ENCODE measurements at regions of chr11 and their contacts with region 1.

Region 1: DNA sequence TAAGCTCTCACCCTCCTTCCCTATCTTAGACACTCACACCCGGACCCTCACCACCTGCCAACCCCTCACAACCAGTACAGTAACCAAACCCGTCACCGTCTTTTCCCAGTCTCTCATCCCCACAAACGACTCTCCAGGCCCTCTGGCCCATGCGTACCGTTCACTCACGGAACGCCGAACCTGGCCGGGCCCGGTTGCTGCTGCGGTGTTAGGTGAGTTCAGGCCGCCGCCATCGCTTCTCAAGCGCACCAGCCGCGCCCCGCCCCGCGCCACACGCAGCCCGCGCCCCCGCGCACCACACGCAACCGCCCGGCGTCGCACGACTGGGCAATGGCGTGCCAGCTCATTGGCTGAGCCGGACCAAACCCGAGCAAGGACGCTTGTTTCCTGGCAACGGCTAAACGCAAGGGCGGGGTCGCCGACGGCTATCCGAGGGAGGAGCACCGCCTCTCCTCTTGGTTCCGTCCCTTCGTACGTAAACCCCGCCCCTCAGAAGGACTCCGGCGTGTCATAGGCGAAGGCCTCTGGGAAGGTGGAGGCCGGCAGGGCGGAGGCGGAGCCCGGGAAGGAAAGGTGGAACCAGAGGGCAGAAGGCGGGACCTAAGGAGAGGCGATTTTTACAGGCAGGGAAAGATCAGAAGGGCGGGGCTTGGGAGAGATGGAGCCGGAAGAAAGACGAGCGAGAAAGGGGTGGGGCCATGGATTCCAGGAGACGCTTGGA is at the start of gene FHIP1B:
- DNase-seq: peak; percentile 99 to 100 (median 100)
- H3K4me3 ChIP-seq: peak within 1 kb of the TSS; percentile 80 to 86
- H3K4me3 Mint-ChIP-seq: peak within 1 kb of the TSS; percentile 96 to 100 (median 98)
- H3K27ac ChIP-seq: peak within 1 kb of the TSS; percentile 75
- H3K27ac Mint-ChIP-seq: peak within 1 kb of the TSS; percentile 87 to 100 (median 99)
- H3K4me1 ChIP-seq: peaks cover 32% of the 10 kb centered on the region
- H3K4me1 Mint-ChIP-seq: peaks cover 27 to 51% (median 42%) of the 10 kb centered on the region in 4 donors
- H3K27me3 ChIP-seq: no peaks in the 10 kb centered on the region
- H3K27me3 Mint-ChIP-seq: peaks cover 0 to 2% of the 10 kb centered on the region in 2 donors
- total RNA-seq, gene FHIP1B: 48.7 to 50.8 TPM

Region 2: DNA sequence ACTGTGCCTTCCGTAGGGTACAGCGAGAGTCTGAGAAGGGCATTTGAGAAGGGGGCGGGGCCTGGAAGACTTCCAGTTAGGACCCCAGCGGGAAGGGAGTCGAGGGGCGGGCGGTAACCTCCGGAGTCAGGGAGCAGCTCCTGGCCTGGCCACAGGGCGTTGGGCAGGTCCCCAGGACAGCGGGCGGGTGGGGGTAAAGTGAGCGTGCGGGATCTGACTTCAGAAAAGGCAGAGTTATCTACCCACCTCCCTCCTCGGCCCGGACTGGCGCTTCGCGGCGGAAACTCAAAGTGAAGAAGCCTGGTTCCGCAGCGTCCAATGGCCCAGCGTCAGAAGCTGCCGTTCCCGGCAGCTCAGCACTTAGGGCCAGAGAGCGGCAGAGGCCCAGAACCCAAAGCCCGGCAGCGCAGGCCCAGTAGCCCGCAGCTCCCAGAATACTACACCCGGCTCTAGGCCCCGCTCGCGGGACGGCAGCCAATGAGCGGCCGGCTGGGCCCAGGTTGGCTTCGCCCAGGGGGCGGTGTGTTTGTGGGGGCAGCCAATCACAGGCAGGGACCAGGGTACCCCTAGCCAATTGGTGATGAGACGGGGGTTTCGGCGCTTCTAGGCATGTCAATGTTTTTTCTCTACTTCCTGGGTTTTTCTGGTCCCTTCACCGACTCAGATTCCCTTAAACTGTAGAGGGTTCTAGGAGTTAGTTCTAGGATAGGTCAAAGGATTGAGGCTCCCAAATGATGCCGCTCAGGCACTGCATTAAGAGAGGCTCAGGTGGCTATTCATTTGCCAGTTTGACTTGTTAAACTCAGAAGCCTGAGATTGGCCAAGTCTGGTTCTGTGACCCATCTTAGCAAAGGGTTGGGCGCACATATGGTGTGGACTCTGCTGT is 1626.5 kb before region 1 on chr11 and contains the start of gene TRIM68:
- CTCF ChIA-PET with region 1: no interaction called
- POLR2A ChIA-PET with region 1: no interaction called
- intact Hi-C with region 1: loop called (anchors 10 kb)
- DNase-seq: peak; percentile 94 to 96 (median 94)
- H3K4me3 ChIP-seq: peak within 1 kb of the TSS; percentile 32 to 79
- H3K4me3 Mint-ChIP-seq: peak within 1 kb of the TSS; percentile 93 to 98 (median 96)
- H3K27ac ChIP-seq: peak within 1 kb of the TSS; percentile 82
- H3K27ac Mint-ChIP-seq: peak within 1 kb of the TSS; percentile 88 to 98 (median 97)
- H3K4me1 ChIP-seq: peaks cover 39% of the 10 kb centered on the region
- H3K4me1 Mint-ChIP-seq: peaks cover 35 to 64% (median 46%) of the 10 kb centered on the region in 4 donors
- H3K27me3 ChIP-seq: no peaks in the 10 kb centered on the region
- H3K27me3 Mint-ChIP-seq: no peaks in the 10 kb centered on the region
- total RNA-seq, gene TRIM68: 23.7 to 28.1 TPM

Region 3: GRCh38 chr11:6251120-6251733 is 16.7 kb after region 1 on chr11:
- CTCF ChIA-PET with region 1: interaction called, 14 read pairs
- POLR2A ChIA-PET with region 1: no interaction called
- intact Hi-C with region 1: no loop called
- DNase-seq: peak in 4 of 5 donors; percentile 26 to 35 (median 31)
- H3K4me3 ChIP-seq: no peak overlapping the region
- H3K4me3 Mint-ChIP-seq: no peak overlapping the region
- H3K27ac ChIP-seq: no peak overlapping the region
- H3K27ac Mint-ChIP-seq: no peak overlapping the region
- H3K4me1 ChIP-seq: no peaks in the 10 kb centered on the region
- H3K4me1 Mint-ChIP-seq: no peaks in the 10 kb centered on the region
- H3K27me3 ChIP-seq: no peaks in the 10 kb centered on the region
- H3K27me3 Mint-ChIP-seq: peaks cover 0 to 1% of the 10 kb centered on the region in 2 donors

Region 4: GRCh38 chr11:6389921-6390724 is 155.6 kb after region 1 on chr11 and contains the start of gene SMPD1:
- CTCF ChIA-PET with region 1: no interaction called
- POLR2A ChIA-PET with region 1: interaction called, 3 read pairs
- intact Hi-C with region 1: loop called (anchors 1 kb)
- DNase-seq: peak; percentile 91 to 96 (median 92)
- H3K4me3 ChIP-seq: peak within 1 kb of the TSS; percentile 79 to 97
- H3K4me3 Mint-ChIP-seq: peak within 1 kb of the TSS; percentile 93 to 98 (median 95)
- H3K27ac ChIP-seq: peak within 1 kb of the TSS; percentile 83
- H3K27ac Mint-ChIP-seq: peak within 1 kb of the TSS; percentile 98 to 100 (median 99)
- H3K4me1 ChIP-seq: peaks cover 50% of the 10 kb centered on the region
- H3K4me1 Mint-ChIP-seq: peaks cover 24 to 61% (median 44%) of the 10 kb centered on the region in 4 donors
- H3K27me3 ChIP-seq: no peaks in the 10 kb centered on the region
- H3K27me3 Mint-ChIP-seq: no peaks in the 10 kb centered on the region
- total RNA-seq, gene SMPD1: 39.3 to 43.6 TPM

Region 5: GRCh38 chr11:6603287-6604080 is 368.9 kb after region 1 on chr11 and contains the starts of genes ILK and RRP8:
- CTCF ChIA-PET with region 1: no interaction called
- POLR2A ChIA-PET with region 1: no interaction called
- intact Hi-C with region 1: loop called (anchors 2 kb)
- DNase-seq: peak; percentile 82 to 86 (median 85)
- H3K4me3 ChIP-seq: peak within 1 kb of the TSS; percentile 94 to 96
- H3K4me3 Mint-ChIP-seq: no peak within 1 kb of the TSS
- H3K27ac ChIP-seq: peak within 1 kb of the TSS; percentile 85
- H3K27ac Mint-ChIP-seq: no peak within 1 kb of the TSS
- H3K4me1 ChIP-seq: peaks cover 62% of the 10 kb centered on the region
- H3K4me1 Mint-ChIP-seq: peaks cover 10 to 34% (median 20%) of the 10 kb centered on the region in 4 donors
- H3K27me3 ChIP-seq: no peaks in the 10 kb centered on the region
- H3K27me3 Mint-ChIP-seq: no peaks in the 10 kb centered on the region
- total RNA-seq, gene ILK: 131 to 132 TPM
- total RNA-seq, gene RRP8: 29.9 to 36.0 TPM

Region 6: GRCh38 chr11:7513234-7514098 is 1278.9 kb after region 1 on chr11 and contains the start of gene PPFIBP2:
- CTCF ChIA-PET with region 1: no interaction called
- POLR2A ChIA-PET with region 1: no interaction called
- intact Hi-C with region 1: loop called (anchors 10 kb)
- DNase-seq: peak; percentile 82 to 87 (median 82)
- H3K4me3 ChIP-seq: peak within 1 kb of the TSS; percentile 88 to 93
- H3K4me3 Mint-ChIP-seq: peak within 1 kb of the TSS; percentile 94 to 97 (median 96)
- H3K27ac ChIP-seq: peak within 1 kb of the TSS; percentile 84
- H3K27ac Mint-ChIP-seq: peak within 1 kb of the TSS; percentile 92 to 98 (median 96)
- H3K4me1 ChIP-seq: peaks cover 20% of the 10 kb centered on the region
- H3K4me1 Mint-ChIP-seq: peaks cover 10 to 58% (median 30%) of the 10 kb centered on the region in 4 donors
- H3K27me3 ChIP-seq: no peaks in the 10 kb centered on the region
- H3K27me3 Mint-ChIP-seq: no peaks in the 10 kb centered on the region
- total RNA-seq, gene PPFIBP2: 18.5 to 22.0 TPM

Measured in CD4-positive, alpha-beta memory T cell (primary cell).